B cell (primary cell): ENCODE measurements at regions of chr2 and their contacts with region 1.

Region 1: GRCh38 chr2:100186126-100186525 is 43.7 kb upstream of the AFF3 start:
- DNase-seq: no peak
- ATAC-seq: no peak
- H3K4me3 ChIP-seq: no peak overlapping the region
- H3K4me3 Mint-ChIP-seq: no peak overlapping the region
- H3K27ac ChIP-seq: no peak overlapping the region
- H3K27ac Mint-ChIP-seq: no peak overlapping the region
- H3K4me1 ChIP-seq: no peaks in the 10 kb centered on the region
- H3K4me1 Mint-ChIP-seq: no peaks in the 10 kb centered on the region
- H3K27me3 ChIP-seq: no peaks in the 10 kb centered on the region
- H3K27me3 Mint-ChIP-seq: no peaks in the 10 kb centered on the region
- CTCF ChIP-seq: no peak

Region 2: DNA sequence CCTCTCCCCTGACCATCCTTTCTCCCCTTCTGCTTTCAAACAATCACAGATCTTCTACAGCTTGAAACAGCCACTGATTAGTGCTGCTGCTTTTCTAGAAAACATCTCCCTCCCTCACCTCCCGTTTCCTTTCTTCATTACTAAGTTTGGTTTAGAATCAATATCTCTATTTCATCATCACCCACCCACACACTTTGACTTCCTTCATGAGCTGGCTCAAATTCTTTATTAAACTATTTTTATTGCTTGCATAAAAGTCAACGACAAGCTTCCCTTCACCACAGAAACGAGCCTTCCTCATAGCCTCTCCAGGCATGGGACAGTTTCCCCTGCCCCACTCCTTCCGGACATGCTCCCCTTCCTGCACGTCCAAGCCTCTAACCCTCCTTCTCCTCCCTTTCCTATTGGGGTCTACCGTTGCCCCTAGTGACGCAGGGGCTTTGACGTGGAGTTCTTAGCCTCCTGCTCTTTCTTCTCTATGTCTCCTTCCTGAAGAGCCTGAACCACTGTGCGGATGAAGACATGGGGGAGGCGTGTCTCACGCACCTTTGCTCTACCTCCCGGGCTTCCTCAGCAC is 215.7 kb before region 1 on chr2:
- CTCF ChIA-PET with region 1: no interaction called
- POLR2A ChIA-PET with region 1: interaction called, 14 read pairs
- intact Hi-C with region 1: no loop called
- DNase-seq: no peak
- ATAC-seq: no peak
- H3K4me3 ChIP-seq: no peak overlapping the region
- H3K4me3 Mint-ChIP-seq: no peak overlapping the region
- H3K27ac ChIP-seq: no peak overlapping the region
- H3K27ac Mint-ChIP-seq: no peak overlapping the region
- H3K4me1 ChIP-seq: no peaks in the 10 kb centered on the region
- H3K4me1 Mint-ChIP-seq: peaks cover 24% of the 10 kb centered on the region
- H3K27me3 ChIP-seq: no peaks in the 10 kb centered on the region
- H3K27me3 Mint-ChIP-seq: no peaks in the 10 kb centered on the region
- CTCF ChIP-seq: no peak